Left lung (tissue), 14 donors: ENCODE measurements at regions of chr14 and their contacts with region 1.

Region 1: DNA sequence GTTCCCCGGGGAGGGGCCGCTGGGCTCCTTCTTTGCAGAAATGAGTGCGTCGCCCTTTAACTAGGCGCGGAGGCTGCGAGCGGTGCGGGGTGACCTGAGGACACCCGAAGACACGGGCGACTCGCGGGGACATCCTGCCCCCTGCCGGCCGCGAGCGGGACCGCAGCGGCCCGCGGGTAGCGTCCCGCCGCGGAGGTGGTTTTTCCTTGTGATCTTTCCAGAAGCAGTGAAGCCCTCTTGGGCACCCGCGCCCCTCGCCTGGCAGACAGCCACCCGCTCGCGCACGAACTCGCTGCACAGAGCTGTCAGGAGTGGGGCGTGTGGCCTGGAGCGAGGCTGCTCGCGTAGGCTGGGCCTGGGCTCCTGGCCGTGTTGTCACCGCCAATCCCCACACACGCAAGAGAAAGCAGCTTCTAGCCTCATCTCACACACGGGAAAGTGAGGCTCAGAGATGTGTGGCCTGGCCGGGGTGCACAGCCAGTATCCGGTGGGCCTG is 67.2 kb downstream of the DIO3 start:
- DNase-seq: peak; percentile 63 to 92 (median 75)
- ATAC-seq: peak; percentile 99
- H3K4me3 ChIP-seq: no peak overlapping the region
- H3K27ac ChIP-seq: no peak overlapping the region
- H3K4me1 ChIP-seq: peaks cover 0 to 12% of the 10 kb centered on the region in 2 donors
- H3K27me3 ChIP-seq: peaks cover 0 to 6% of the 10 kb centered on the region in 2 donors
- CTCF ChIP-seq: peak; percentile 99

Region 2: GRCh38 chr14:100842799-100843198 is 785.7 kb before region 1 on chr14:
- intact Hi-C with region 1: loop called in 1 of 2 experiments (anchors 10 kb)
- DNase-seq: no peak
- ATAC-seq: no peak
- H3K4me3 ChIP-seq: no peak overlapping the region
- H3K27ac ChIP-seq: peak overlapping the region in 1 of 2 donors; percentile 72
- H3K4me1 ChIP-seq: peaks cover 0 to 11% of the 10 kb centered on the region in 2 donors
- H3K27me3 ChIP-seq: no peaks in the 10 kb centered on the region
- CTCF ChIP-seq: no peak

Region 3: DNA sequence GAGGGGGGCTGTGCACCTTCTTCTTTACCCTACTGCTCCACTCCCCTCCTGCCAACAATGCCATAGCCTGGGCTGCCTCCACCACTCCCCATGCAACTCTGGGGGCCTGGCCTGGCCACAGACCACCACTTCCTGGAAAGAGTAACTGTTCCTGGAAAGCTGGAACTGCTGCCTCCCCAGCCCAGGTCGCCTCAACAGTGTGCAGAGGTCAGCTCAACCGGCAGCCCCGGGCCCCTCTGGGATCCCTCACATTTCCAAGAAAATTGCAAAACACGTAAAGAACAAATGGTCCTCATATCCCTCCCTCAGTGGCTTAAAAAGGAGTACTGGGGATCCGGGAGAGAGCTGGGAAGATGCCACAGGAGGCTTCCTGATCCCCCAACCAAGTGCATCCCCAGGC is 89.6 kb before region 1 on chr14:
- intact Hi-C with region 1: no loop called
- DNase-seq: no peak
- ATAC-seq: no peak
- H3K4me3 ChIP-seq: no peak overlapping the region
- H3K27ac ChIP-seq: no peak overlapping the region
- H3K4me1 ChIP-seq: peaks cover 0 to 14% of the 10 kb centered on the region in 2 donors
- H3K27me3 ChIP-seq: no peaks in the 10 kb centered on the region
- CTCF ChIP-seq: no peak

Region 4: DNA sequence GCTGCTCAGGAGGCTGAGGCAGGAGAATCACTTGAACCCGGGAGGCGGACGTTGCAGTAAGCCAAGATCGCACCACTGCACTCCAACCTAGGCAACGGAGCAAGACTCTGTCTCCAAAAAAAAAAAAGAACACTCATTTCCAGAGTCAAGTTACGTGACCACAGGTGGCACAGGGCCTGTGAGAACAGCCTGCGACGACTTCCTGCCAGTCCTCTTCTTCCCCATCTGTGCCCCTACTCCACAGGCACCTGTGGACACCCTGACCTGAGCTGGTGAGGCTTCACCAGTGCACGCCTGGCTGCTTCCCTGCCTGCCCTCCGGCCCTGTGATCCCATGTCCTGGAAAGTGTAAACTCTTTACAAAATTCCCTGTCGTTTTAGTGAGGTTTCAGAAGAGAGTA is 210.7 kb after region 1 on chr14:
- intact Hi-C with region 1: no loop called
- DNase-seq: no peak
- ATAC-seq: no peak
- H3K4me3 ChIP-seq: no peak overlapping the region
- H3K27ac ChIP-seq: no peak overlapping the region
- H3K4me1 ChIP-seq: peaks cover 12 to 44% of the 10 kb centered on the region in 2 donors
- H3K27me3 ChIP-seq: no peaks in the 10 kb centered on the region
- CTCF ChIP-seq: no peak